Naive thymus-derived CD4-positive, alpha-beta T cell (primary cell): ENCODE measurements at regions of chr15 and their contacts with region 1.

Region 1: DNA sequence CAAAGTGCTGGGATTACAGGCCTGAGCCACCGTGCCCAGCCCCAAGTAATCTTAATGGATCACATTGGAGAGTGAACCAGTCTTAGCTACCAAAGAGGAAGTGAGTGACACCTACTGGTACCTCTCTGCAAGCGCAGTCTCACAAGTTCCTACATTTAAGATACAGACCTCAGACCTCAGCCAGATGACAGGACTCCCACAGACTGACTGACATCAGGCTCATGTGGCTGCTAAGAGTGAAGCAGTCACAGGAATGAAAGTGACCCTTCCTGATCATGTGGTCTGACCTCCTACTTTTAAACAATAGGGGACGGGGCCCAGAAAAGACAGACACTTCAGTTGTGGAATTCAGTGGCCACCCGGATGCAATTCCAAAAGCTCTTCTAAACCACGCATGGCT is 36.3 kb upstream of the GNB5 start:
- DNase-seq: peak in 8 of 9 donors; percentile 51 to 74 (median 65)
- ATAC-seq: peak; percentile 98
- H3K4me3 ChIP-seq: no peak overlapping the region
- H3K4me3 Mint-ChIP-seq: no peak overlapping the region
- H3K27ac ChIP-seq: no peak overlapping the region
- H3K27ac Mint-ChIP-seq: peak overlapping the region in 2 of 9 donors; percentile 19 to 56
- H3K4me1 ChIP-seq: peaks cover 0 to under 1% of the 10 kb centered on the region in 2 donors
- H3K4me1 Mint-ChIP-seq: peaks cover 10 to 26% (median 19%) of the 10 kb centered on the region in 7 donors
- H3K27me3 ChIP-seq: no peaks in the 10 kb centered on the region
- H3K27me3 Mint-ChIP-seq: no peaks in the 10 kb centered on the region

Region 2: GRCh38 chr15:51649659-51650521 is 577.6 kb before region 1 on chr15:
- CTCF ChIA-PET with region 1: no interaction called
- POLR2A ChIA-PET with region 1: no interaction called
- intact Hi-C with region 1: loop called in 1 of 2 experiments (anchors 2 kb)
- DNase-seq: peak in 7 of 9 donors; percentile 53 to 76 (median 68)
- ATAC-seq: peak; percentile 86
- H3K4me3 ChIP-seq: no peak overlapping the region
- H3K4me3 Mint-ChIP-seq: no peak overlapping the region
- H3K27ac ChIP-seq: no peak overlapping the region
- H3K27ac Mint-ChIP-seq: no peak overlapping the region
- H3K4me1 ChIP-seq: no peaks in the 10 kb centered on the region
- H3K4me1 Mint-ChIP-seq: no peaks in the 10 kb centered on the region
- H3K27me3 ChIP-seq: no peaks in the 10 kb centered on the region
- H3K27me3 Mint-ChIP-seq: peaks cover 0 to 17% (median 0%) of the 10 kb centered on the region in 5 donors

Region 3: GRCh38 chr15:52078876-52079700 is 148.4 kb before region 1 on chr15:
- CTCF ChIA-PET with region 1: interaction called, 12 read pairs
- POLR2A ChIA-PET with region 1: interaction called, 5 read pairs
- intact Hi-C with region 1: loop called (anchors 1 to 5 kb)
- DNase-seq: peak; percentile 58 to 82 (median 75)
- ATAC-seq: peak; percentile 87
- H3K4me3 ChIP-seq: no peak overlapping the region
- H3K4me3 Mint-ChIP-seq: no peak overlapping the region
- H3K27ac ChIP-seq: no peak overlapping the region
- H3K27ac Mint-ChIP-seq: peak overlapping the region in 1 of 9 donors; percentile 49
- H3K4me1 ChIP-seq: peaks cover 0 to 13% of the 10 kb centered on the region in 2 donors
- H3K4me1 Mint-ChIP-seq: peaks cover 0 to 26% (median 10%) of the 10 kb centered on the region in 7 donors
- H3K27me3 ChIP-seq: no peaks in the 10 kb centered on the region
- H3K27me3 Mint-ChIP-seq: peaks cover 0 to 7% (median 0%) of the 10 kb centered on the region in 5 donors

Region 4: DNA sequence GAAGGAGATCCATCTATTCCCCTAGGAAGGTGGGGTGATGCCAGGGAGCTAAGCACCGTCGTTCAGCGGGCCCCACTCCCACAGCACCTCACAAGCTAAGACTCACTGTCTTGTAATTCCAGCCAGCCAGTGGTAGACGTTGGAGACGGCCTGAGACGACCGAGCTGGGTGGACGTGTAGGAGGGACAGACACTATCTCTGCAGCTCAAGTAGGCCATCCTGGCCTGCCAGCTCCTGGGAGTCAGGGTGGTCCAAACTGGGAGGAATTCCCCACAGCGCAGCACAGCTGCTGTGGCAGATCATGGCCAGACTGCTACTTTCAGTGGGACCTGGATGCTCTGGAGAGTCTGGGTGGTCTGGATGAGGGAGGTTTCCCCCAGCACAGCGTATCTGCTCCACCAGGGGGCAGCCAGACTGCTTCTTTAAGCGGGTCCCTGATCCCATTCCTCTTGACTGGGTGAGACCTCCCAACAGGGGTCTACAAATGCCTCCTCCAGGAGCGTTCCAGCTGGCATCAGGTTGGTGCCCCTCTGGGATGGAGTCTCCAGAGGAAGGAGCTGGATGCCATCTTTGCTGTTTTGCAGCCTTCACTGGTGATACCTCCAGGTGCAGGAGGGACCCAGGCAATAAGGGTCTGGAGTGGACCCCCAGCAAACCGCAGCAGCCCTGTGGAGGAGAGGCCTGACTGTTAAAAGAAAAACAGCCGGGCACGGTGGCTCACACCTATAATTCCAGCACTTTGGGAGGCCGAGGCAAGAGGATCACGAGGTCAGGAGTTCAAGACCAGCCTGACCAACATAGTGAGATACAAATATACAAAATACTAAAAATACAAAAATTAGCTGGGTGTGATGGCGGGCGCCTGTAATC is 63.9 kb before region 1 on chr15:
- CTCF ChIA-PET with region 1: interaction called, 16 read pairs
- POLR2A ChIA-PET with region 1: no interaction called
- intact Hi-C with region 1: loop called in 1 of 2 experiments (anchors 1 kb)
- DNase-seq: no peak
- ATAC-seq: no peak
- H3K4me3 ChIP-seq: no peak overlapping the region
- H3K4me3 Mint-ChIP-seq: no peak overlapping the region
- H3K27ac ChIP-seq: no peak overlapping the region
- H3K27ac Mint-ChIP-seq: no peak overlapping the region
- H3K4me1 ChIP-seq: peaks cover 0 to 5% of the 10 kb centered on the region in 2 donors
- H3K4me1 Mint-ChIP-seq: peaks cover 18 to 46% (median 37%) of the 10 kb centered on the region in 7 donors
- H3K27me3 ChIP-seq: no peaks in the 10 kb centered on the region
- H3K27me3 Mint-ChIP-seq: peaks cover 0 to 2% (median 0%) of the 10 kb centered on the region in 5 donors

Region 5: DNA sequence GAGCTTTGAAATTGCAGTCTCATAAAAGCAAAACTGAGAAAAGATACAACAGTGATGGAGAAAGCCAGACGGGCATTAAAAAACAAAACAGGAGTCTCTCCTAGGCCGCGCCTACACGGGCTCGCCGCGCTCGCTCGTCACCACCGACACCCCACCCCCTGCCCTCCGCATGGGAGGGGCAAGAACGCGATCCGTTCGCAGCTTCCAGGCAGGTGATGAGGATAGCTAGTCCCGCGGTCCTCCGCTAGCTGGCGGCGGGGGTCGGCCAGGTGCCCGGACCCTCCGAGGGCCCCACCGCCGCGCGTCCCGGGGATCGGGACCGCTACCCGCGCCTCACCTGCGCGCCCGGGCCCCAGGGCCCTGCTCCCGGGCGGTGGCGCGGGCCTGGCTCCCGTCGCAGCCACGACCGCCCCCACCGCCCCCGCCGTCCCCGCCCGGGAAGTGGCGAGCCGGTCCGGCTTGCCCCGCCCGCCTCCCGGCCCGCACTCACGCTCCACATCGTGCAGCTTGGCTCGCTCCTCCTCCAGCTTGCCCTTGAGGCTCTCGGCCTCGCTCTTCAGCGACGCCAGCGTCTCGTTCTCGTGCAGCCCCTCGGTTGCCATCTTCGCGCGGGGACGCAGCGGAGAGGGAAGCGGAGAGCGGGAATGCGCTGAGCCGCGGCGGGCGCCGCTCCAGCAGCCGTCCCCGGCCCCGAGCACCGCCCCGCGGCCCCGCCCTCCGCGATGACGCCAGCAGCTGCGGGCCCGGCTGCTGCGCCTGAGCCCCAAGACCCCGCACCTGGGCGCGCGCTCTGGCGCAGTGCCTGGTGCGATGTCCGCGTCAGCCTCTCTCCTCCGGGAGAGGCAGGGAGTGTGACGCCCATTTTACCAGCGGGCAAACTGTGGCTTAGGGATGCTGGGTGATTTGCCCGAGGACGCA is 47.9 kb before region 1 on chr15:
- CTCF ChIA-PET with region 1: interaction called, 14 read pairs
- POLR2A ChIA-PET with region 1: interaction called, 53 read pairs
- intact Hi-C with region 1: loop called (anchors 1 kb)
- DNase-seq: peak; percentile 79 to 92 (median 91)
- ATAC-seq: peak; percentile 91
- H3K4me3 ChIP-seq: peak overlapping the region; percentile 98
- H3K4me3 Mint-ChIP-seq: peak overlapping the region; percentile 86 to 100 (median 94)
- H3K27ac ChIP-seq: peak overlapping the region; percentile 95
- H3K27ac Mint-ChIP-seq: peak overlapping the region; percentile 90 to 99 (median 98)
- H3K4me1 ChIP-seq: peaks cover 19 to 20% of the 10 kb centered on the region in 2 donors
- H3K4me1 Mint-ChIP-seq: peaks cover 14 to 50% (median 40%) of the 10 kb centered on the region in 7 donors
- H3K27me3 ChIP-seq: no peaks in the 10 kb centered on the region
- H3K27me3 Mint-ChIP-seq: no peaks in the 10 kb centered on the region

Region 6: DNA sequence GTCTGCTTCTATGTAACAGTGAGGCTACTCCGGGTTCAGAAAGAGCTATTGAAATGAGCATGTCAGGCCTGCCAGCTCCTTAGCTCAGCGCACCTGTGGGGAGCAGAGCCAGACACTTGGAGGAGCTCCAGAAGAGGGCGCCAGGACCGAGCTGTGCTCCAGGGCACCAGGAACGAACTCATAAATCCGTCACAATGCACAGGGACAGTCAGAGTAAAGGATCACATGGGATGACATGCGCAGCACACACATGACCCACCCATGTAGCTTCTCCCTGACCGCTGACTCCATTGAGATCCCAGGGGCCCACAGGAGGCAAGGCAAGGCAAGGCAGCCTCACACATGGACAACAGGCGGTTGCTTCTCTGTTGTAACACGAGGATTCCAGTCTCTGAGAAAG is 10.3 kb before region 1 on chr15:
- CTCF ChIA-PET with region 1: interaction called, 14 read pairs
- POLR2A ChIA-PET with region 1: interaction called, 7 read pairs
- intact Hi-C with region 1: no loop called
- DNase-seq: no peak
- ATAC-seq: no peak
- H3K4me3 ChIP-seq: no peak overlapping the region
- H3K4me3 Mint-ChIP-seq: no peak overlapping the region
- H3K27ac ChIP-seq: no peak overlapping the region
- H3K27ac Mint-ChIP-seq: no peak overlapping the region
- H3K4me1 ChIP-seq: peaks cover 5 to 9% of the 10 kb centered on the region in 2 donors
- H3K4me1 Mint-ChIP-seq: peaks cover 9 to 28% (median 16%) of the 10 kb centered on the region in 7 donors
- H3K27me3 ChIP-seq: no peaks in the 10 kb centered on the region
- H3K27me3 Mint-ChIP-seq: no peaks in the 10 kb centered on the region